Caco-2 (cell line): ENCODE measurements at regions of chr11 and their contacts with region 1.

Region 1: GRCh38 chr11:69414773-69415187 is 66.7 kb upstream of the LINC01488 start:
- DNase-seq: no peak
- H3K4me3 ChIP-seq: no peak overlapping the region
- H3K4me3 Mint-ChIP-seq: no peak overlapping the region
- H3K27ac Mint-ChIP-seq: peak overlapping the region; percentile 47
- H3K4me1 ChIP-seq: peaks cover 6% of the 10 kb centered on the region
- H3K4me1 Mint-ChIP-seq: peaks cover 7% of the 10 kb centered on the region
- H3K27me3 ChIP-seq: no peaks in the 10 kb centered on the region
- H3K27me3 Mint-ChIP-seq: no peaks in the 10 kb centered on the region
- CTCF ChIP-seq: no peak

Region 2: GRCh38 chr11:69337211-69337721 is 77.5 kb before region 1 on chr11:
- CTCF ChIA-PET with region 1: no interaction called
- POLR2A ChIA-PET with region 1: no interaction called
- intact Hi-C with region 1: no loop called
- DNase-seq: peak; percentile 40 to 61
- H3K4me3 ChIP-seq: no peak overlapping the region
- H3K4me3 Mint-ChIP-seq: no peak overlapping the region
- H3K27ac Mint-ChIP-seq: no peak overlapping the region
- H3K4me1 ChIP-seq: peaks cover 9% of the 10 kb centered on the region; the same call in 1 of the 2 replicates
- H3K4me1 Mint-ChIP-seq: no peaks in the 10 kb centered on the region
- H3K27me3 ChIP-seq: no peaks in the 10 kb centered on the region
- H3K27me3 Mint-ChIP-seq: peaks cover under 1% of the 10 kb centered on the region
- CTCF ChIP-seq: no peak

Region 3: GRCh38 chr11:69470301-69470700 is 55.5 kb after region 1 on chr11:
- CTCF ChIA-PET with region 1: interaction called, 10 read pairs
- POLR2A ChIA-PET with region 1: no interaction called
- intact Hi-C with region 1: no loop called
- DNase-seq: peak in 1 of 2 experiments; percentile 43
- H3K4me3 ChIP-seq: no peak overlapping the region
- H3K4me3 Mint-ChIP-seq: no peak overlapping the region
- H3K27ac Mint-ChIP-seq: peak overlapping the region; percentile 42
- H3K4me1 ChIP-seq: peaks cover 38% of the 10 kb centered on the region
- H3K4me1 Mint-ChIP-seq: peaks cover 26% of the 10 kb centered on the region
- H3K27me3 ChIP-seq: no peaks in the 10 kb centered on the region
- H3K27me3 Mint-ChIP-seq: no peaks in the 10 kb centered on the region
- CTCF ChIP-seq: no peak

Region 4: GRCh38 chr11:69791276-69792180 is 376.7 kb after region 1 on chr11:
- CTCF ChIA-PET with region 1: no interaction called
- POLR2A ChIA-PET with region 1: no interaction called
- intact Hi-C with region 1: no loop called
- DNase-seq: no peak
- H3K4me3 ChIP-seq: no peak overlapping the region
- H3K4me3 Mint-ChIP-seq: no peak overlapping the region
- H3K27ac Mint-ChIP-seq: no peak overlapping the region
- H3K4me1 ChIP-seq: no peaks in the 10 kb centered on the region
- H3K4me1 Mint-ChIP-seq: no peaks in the 10 kb centered on the region
- H3K27me3 ChIP-seq: no peaks in the 10 kb centered on the region
- H3K27me3 Mint-ChIP-seq: peaks cover 4% of the 10 kb centered on the region
- CTCF ChIP-seq: no peak